AG04449 (cell line): ENCODE measurements at regions of chr1 and their contacts with region 1.

Region 1: GRCh38 chr1:204941421-204942338 is 71.0 kb downstream of the NFASC start:
- DNase-seq: no peak
- H3K4me3 ChIP-seq: no peak overlapping the region
- CTCF ChIP-seq: peak; percentile 78

Region 2: GRCh38 chr1:204797401-204797800 is 144.3 kb before region 1 on chr1:
- CTCF ChIA-PET with region 1: interaction called, 11 read pairs
- POLR2A ChIA-PET with region 1: no interaction called
- DNase-seq: no peak
- H3K4me3 ChIP-seq: no peak overlapping the region
- CTCF ChIP-seq: no peak

Region 3: DNA sequence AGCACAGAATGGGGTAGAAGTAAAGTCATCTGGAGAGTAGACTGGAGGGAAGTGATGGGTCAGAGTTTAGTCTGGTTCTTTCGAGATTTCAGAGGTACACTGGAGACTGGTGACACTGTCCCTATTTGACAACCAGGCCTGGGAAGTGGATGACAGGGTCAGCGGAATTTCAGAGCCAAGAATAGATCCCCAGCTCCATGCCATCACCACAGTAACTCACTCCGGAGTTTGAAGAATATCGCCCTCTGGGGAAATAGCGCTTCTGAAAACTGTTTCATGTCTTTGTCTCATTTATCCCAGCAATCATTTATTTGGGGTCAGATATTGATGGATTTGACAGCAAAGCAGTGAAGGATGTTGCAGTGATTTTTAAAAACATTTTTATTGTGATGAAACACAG is 78.7 kb before region 1 on chr1:
- CTCF ChIA-PET with region 1: no interaction called
- POLR2A ChIA-PET with region 1: no interaction called
- DNase-seq: no peak
- H3K4me3 ChIP-seq: no peak overlapping the region
- CTCF ChIP-seq: no peak

Region 4: GRCh38 chr1:204894031-204894430 is 47.6 kb before region 1 on chr1:
- CTCF ChIA-PET with region 1: interaction called, 17 read pairs
- POLR2A ChIA-PET with region 1: no interaction called
- DNase-seq: no peak
- H3K4me3 ChIP-seq: no peak overlapping the region
- CTCF ChIP-seq: no peak

Region 5: DNA sequence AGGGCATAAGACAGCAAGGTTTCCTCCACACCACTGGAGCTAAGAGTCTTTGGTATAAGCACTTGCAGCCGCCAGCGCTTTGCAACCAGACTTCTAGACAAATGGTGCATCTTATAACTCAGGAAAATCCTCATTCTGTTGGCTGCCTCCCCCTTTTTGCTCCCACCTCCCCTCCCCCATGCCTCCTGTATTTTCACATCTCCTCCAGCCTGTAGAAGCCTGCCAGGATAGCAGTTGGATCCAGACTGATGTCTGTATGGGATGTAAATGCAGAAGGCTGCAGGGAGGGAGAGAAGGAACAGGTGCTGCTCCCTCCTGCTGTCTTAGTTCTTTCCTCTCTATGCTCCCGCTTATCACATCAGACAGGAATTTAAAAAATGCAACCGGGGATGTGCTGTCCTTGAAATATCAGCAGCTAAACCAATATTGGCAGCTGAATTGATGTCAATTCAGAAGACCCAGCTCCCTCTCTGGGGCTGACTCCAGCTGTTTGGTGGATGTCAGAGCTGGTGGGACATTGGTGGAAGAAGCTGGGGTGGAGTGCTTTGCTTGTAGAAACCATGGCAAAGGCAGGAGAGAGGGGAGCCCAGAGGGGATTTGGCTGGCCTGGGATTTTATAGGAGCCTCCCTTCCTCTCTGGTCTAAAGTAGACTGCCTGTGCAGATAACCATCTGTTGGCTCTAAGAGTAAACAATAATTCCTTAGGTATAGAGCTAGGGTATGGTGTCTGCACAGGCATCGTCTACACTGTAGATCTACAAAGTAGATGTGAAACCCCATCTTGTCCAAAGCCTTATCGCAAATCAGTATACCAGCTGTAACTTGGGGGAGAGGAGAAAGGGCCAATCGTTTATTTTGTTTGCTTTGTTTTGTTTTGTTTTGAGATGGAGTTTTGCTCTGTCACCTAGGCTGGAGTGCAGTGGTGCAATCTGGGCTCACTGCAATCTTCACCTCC is 17.4 kb before region 1 on chr1:
- CTCF ChIA-PET with region 1: interaction called, 98 read pairs
- POLR2A ChIA-PET with region 1: no interaction called
- DNase-seq: no peak
- H3K4me3 ChIP-seq: no peak overlapping the region
- CTCF ChIP-seq: no peak

Region 6: GRCh38 chr1:204968951-204969350 is 27.3 kb after region 1 on chr1:
- CTCF ChIA-PET with region 1: interaction called, 32 read pairs
- POLR2A ChIA-PET with region 1: no interaction called
- DNase-seq: no peak
- H3K4me3 ChIP-seq: no peak overlapping the region
- CTCF ChIP-seq: no peak

Region 7: GRCh38 chr1:205020466-205020865 is 78.8 kb after region 1 on chr1:
- CTCF ChIA-PET with region 1: no interaction called
- POLR2A ChIA-PET with region 1: no interaction called
- DNase-seq: no peak
- H3K4me3 ChIP-seq: no peak overlapping the region
- CTCF ChIP-seq: no peak

Region 8: GRCh38 chr1:205054013-205054412 is 112.3 kb after region 1 on chr1:
- CTCF ChIA-PET with region 1: no interaction called
- POLR2A ChIA-PET with region 1: no interaction called
- DNase-seq: no peak
- H3K4me3 ChIP-seq: no peak overlapping the region
- CTCF ChIP-seq: no peak

Region 9: GRCh38 chr1:205098242-205098641 is 156.6 kb after region 1 on chr1:
- CTCF ChIA-PET with region 1: no interaction called
- POLR2A ChIA-PET with region 1: no interaction called
- DNase-seq: no peak
- H3K4me3 ChIP-seq: no peak overlapping the region
- CTCF ChIP-seq: no peak